A549 (cell line): ENCODE measurements at regions of chr2 and their contacts with region 1.

Region 1: GRCh38 chr2:10122386-10123280 is at the start of gene RRM2:
- DNase-seq: peak; percentile 97
- ATAC-seq: peak; percentile 73 to 88
- H3K4me3 ChIP-seq: peak within 1 kb of the TSS; percentile 76
- H3K27ac ChIP-seq: peak within 1 kb of the TSS; percentile 88 to 95
- H3K4me1 ChIP-seq: peaks cover 30% of the 10 kb centered on the region
- CTCF ChIP-seq: no peak
- EP300 ChIP-seq: no peak
- POLR2A ChIP-seq: peak; percentile 91
- RAD21 ChIP-seq: no peak
- polyA plus RNA-seq, gene RRM2: 65.1 and 84.4 TPM in 2 replicates

Region 2: GRCh38 chr2:9961013-9961412 is 161.6 kb before region 1 on chr2:
- CTCF ChIA-PET with region 1: no interaction called
- POLR2A ChIA-PET with region 1: no interaction called
- DNase-seq: no peak
- ATAC-seq: no peak; a peak in 1 of 6 replicates
- H3K4me3 ChIP-seq: no peak overlapping the region
- H3K27ac ChIP-seq: no peak overlapping the region
- H3K4me1 ChIP-seq: no peaks in the 10 kb centered on the region
- CTCF ChIP-seq: no peak
- EP300 ChIP-seq: no peak
- POLR2A ChIP-seq: no peak
- RAD21 ChIP-seq: no peak

Region 3: GRCh38 chr2:10072656-10073480 is 49.8 kb before region 1 on chr2:
- CTCF ChIA-PET with region 1: interaction called, 26 read pairs
- POLR2A ChIA-PET with region 1: no interaction called
- DNase-seq: peak; percentile 88 to 95
- ATAC-seq: peak; percentile 94 to 96
- H3K4me3 ChIP-seq: no peak overlapping the region
- H3K27ac ChIP-seq: no peak overlapping the region
- H3K4me1 ChIP-seq: peaks cover 4% of the 10 kb centered on the region; the same call in 1 of the 3 replicates
- CTCF ChIP-seq: peak; percentile 95
- EP300 ChIP-seq: no peak
- POLR2A ChIP-seq: no peak
- RAD21 ChIP-seq: peak; percentile 81 to 85

Region 4: DNA sequence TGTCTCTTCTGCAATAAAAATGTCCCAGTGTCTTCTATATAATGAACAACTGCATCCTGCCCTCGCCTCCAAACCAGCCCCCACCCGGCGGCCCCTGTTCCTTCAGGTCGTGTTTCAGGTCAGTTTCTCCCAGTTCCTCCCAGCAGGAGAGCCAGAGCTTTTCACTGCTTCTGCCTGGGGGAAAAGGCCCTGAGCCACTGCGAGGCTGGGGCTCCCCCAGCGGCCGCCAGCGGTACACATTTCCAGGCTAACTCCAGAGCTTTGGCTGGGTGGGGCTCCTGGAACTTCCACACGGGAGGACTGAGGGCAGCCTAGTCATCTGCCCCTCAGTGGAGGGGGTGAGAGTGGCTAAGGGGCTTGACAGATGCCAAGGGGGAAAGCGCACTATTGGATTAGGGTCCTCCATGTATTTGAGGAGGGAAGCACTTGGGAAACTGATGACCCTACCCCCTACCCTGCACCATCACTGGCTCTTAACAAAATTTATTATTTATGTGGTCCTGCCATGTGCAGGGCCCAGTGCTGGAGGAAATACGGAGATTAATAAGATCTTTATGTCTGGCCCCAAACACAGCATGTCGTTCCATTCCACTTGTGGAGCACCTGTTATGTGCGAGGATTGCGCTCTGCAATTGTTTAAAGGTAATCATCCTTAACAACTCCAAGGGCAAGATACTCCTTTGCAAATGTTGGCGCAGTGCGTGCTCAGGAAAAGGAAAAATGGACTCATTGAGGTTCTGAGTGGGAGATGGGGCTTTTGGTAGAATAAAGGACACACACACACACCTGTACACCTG is 25.1 kb before region 1 on chr2:
- CTCF ChIA-PET with region 1: interaction called, 16 read pairs
- POLR2A ChIA-PET with region 1: no interaction called
- DNase-seq: peak; percentile 70 to 97
- ATAC-seq: peak; percentile 97 to 99
- H3K4me3 ChIP-seq: no peak overlapping the region
- H3K27ac ChIP-seq: no peak overlapping the region
- H3K4me1 ChIP-seq: peaks cover 5% of the 10 kb centered on the region
- CTCF ChIP-seq: peak; percentile 88
- EP300 ChIP-seq: no peak
- POLR2A ChIP-seq: no peak
- RAD21 ChIP-seq: peak; percentile 81 to 86

Region 5: GRCh38 chr2:10109311-10109710 is 13.3 kb before region 1 on chr2:
- CTCF ChIA-PET with region 1: interaction called, 15 read pairs
- POLR2A ChIA-PET with region 1: no interaction called
- DNase-seq: no peak
- ATAC-seq: no peak
- H3K4me3 ChIP-seq: no peak overlapping the region
- H3K27ac ChIP-seq: no peak overlapping the region
- H3K4me1 ChIP-seq: peaks cover 7% of the 10 kb centered on the region; the same call in 1 of the 3 replicates
- CTCF ChIP-seq: no peak
- EP300 ChIP-seq: no peak
- POLR2A ChIP-seq: no peak
- RAD21 ChIP-seq: no peak

Region 6: DNA sequence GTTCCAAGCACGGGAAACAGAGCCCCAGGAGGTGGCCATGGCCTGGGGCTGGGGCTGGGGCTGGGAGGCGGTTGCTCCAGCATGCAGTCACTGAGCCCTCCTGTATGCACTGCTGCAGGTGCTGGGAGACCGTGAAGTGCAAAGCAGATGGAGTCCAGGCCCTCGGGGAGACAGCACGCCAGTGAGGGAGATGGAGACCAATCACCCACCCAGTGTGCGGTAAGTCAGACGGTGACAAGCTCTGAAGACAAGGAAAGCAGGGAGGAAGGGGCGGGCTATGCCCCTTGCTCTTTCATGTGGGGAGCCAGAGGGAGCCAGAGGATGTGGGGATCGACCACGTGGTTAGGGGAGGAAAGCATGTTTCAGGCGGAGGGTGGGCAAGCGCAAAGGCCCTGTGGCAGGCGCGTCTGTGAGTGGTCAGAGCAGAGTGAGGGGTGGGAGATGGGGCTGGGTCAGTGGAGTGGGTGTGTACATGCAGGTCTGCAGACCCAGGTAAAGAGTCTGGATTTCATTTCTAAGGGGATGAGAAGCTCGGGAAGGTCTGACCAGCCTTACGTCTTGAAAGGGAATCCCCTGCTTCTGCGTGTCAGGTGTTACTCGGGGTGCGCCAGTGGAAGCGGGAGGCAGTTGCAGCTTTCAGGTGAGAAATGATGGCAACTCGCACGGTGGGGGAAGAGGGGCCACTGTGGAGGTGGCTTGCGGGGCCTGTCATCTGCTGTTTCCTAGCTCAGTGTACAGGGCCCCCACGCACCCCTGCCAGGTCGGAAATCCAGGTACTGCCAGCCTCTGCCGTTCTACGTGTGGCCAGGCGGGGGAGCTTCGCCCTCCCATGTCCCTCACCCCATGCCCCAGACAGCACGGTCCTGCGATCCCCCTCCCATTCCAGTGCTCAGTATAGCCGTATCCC is 19.4 kb after region 1 on chr2:
- CTCF ChIA-PET with region 1: interaction called, 191 read pairs
- POLR2A ChIA-PET with region 1: interaction called, 3 read pairs
- DNase-seq: peak in 1 of 2 experiments; percentile 58
- ATAC-seq: peak; percentile 76 to 86
- H3K4me3 ChIP-seq: no peak overlapping the region
- H3K27ac ChIP-seq: no peak overlapping the region
- H3K4me1 ChIP-seq: peaks cover 7% of the 10 kb centered on the region
- CTCF ChIP-seq: peak; percentile 68
- EP300 ChIP-seq: no peak
- POLR2A ChIP-seq: no peak
- RAD21 ChIP-seq: peak; percentile 79 to 80

Region 7: GRCh38 chr2:10302479-10303180 is 180.0 kb after region 1 on chr2 and contains the start of gene HPCAL1:
- CTCF ChIA-PET with region 1: interaction called, 29 read pairs
- POLR2A ChIA-PET with region 1: no interaction called
- DNase-seq: peak; percentile 92 to 93
- ATAC-seq: peak; percentile 79 to 91
- H3K4me3 ChIP-seq: peak within 1 kb of the TSS; percentile 84
- H3K27ac ChIP-seq: peak within 1 kb of the TSS; percentile 95 to 98
- H3K4me1 ChIP-seq: peaks cover 62% of the 10 kb centered on the region
- CTCF ChIP-seq: peak; percentile 68
- EP300 ChIP-seq: no peak
- POLR2A ChIP-seq: peak; percentile 91
- RAD21 ChIP-seq: peak; percentile 36 to 78; a peak in 4 of 5 replicates
- polyA plus RNA-seq, gene HPCAL1: 37.8 and 44.4 TPM in 2 replicates